MCF 10A (cell line): ENCODE measurements at regions of chr4 and their contacts with region 1.

Region 1: DNA sequence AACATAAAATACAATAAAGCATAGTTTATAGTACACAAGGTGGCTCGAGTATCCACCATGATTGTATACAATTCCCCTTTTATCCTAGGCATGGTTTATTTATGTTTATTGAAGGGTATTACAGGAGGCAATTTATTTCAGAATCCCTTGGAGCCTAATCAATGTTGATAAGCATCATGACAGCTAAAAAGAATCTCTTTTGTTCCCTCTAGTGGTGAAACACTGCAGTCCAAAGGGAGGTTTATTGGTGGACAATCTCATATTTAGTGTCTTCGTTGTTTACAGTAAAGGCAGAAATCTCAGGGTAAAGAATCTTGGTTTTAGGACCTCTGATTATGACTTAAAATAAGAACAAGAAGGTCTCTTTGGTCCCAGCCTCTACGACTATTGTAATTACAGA is 1712.5 kb downstream of the C4orf33 start:
- DNase-seq: peak; percentile 50
- H3K4me3 Mint-ChIP-seq: no peak overlapping the region
- H3K27ac Mint-ChIP-seq: no peak overlapping the region
- H3K4me1 Mint-ChIP-seq: no peaks in the 10 kb centered on the region
- H3K27me3 Mint-ChIP-seq: no peaks in the 10 kb centered on the region
- CTCF ChIP-seq: peak; percentile 71

Region 2: DNA sequence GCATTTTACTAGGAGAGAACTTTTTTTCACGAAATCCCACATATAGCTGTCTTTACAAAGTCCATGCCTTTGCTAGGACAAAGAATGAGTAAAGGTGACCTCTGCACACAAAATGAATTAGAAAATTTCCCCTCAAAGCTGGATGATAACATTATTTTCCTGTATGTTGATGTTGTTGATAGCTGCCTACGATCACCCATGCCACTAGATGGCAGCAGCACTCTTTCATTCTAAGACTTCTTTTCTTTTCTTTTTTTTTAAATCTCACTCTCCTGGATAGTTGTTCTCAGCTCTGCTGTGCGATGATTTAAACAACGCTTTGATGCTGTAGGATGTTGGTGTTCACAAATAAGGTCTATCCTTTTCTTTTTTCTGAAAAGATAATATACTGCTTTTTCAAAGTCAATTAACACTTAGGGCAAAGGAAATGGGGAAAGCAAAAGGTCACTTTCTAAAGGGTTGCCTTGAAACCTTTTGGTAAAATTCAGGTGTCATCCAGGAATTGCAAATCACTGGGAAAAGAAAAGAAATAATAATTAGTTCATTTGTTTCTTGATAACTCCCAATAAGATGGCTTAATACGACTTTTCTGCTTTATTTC is 1445.7 kb before region 1 on chr4:
- CTCF ChIA-PET with region 1: no interaction called
- POLR2A ChIA-PET with region 1: no interaction called
- intact Hi-C with region 1: loop called (anchors 2 kb)
- DNase-seq: peak; percentile 87
- H3K4me3 Mint-ChIP-seq: no peak overlapping the region
- H3K27ac Mint-ChIP-seq: no peak overlapping the region
- H3K4me1 Mint-ChIP-seq: peaks cover 12% of the 10 kb centered on the region
- H3K27me3 Mint-ChIP-seq: no peaks in the 10 kb centered on the region
- CTCF ChIP-seq: peak; percentile 78

Region 3: DNA sequence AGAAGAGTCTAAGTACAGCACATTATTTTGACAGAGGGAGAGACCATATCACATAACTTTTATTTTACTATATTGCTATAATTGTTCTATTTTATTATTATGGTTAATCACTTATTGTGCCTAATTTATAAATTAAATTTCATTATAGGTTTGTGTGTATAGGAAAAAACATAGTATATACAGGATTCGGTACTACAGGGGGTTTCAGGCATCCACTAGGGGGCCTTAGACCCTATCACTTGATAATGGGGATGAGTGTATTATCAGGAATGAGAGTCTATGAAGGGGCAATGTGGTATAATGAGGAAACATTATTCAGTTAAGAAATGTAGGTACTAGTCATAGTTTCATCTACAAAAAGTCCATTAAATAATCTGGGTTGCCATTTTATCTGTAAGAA is 879.4 kb before region 1 on chr4:
- CTCF ChIA-PET with region 1: interaction called, 3 read pairs
- POLR2A ChIA-PET with region 1: no interaction called
- intact Hi-C with region 1: loop called (anchors 5 kb)
- DNase-seq: peak; percentile 18
- H3K4me3 Mint-ChIP-seq: no peak overlapping the region
- H3K27ac Mint-ChIP-seq: no peak overlapping the region
- H3K4me1 Mint-ChIP-seq: no peaks in the 10 kb centered on the region
- H3K27me3 Mint-ChIP-seq: no peaks in the 10 kb centered on the region
- CTCF ChIP-seq: no peak

Region 4: GRCh38 chr4:130359542-130359941 is 448.9 kb before region 1 on chr4:
- CTCF ChIA-PET with region 1: interaction called, 12 read pairs
- POLR2A ChIA-PET with region 1: no interaction called
- intact Hi-C with region 1: loop called (anchors 1 kb)
- DNase-seq: peak; percentile 39
- H3K4me3 Mint-ChIP-seq: no peak overlapping the region
- H3K27ac Mint-ChIP-seq: no peak overlapping the region
- H3K4me1 Mint-ChIP-seq: no peaks in the 10 kb centered on the region
- H3K27me3 Mint-ChIP-seq: no peaks in the 10 kb centered on the region
- CTCF ChIP-seq: peak; percentile 65

Region 5: DNA sequence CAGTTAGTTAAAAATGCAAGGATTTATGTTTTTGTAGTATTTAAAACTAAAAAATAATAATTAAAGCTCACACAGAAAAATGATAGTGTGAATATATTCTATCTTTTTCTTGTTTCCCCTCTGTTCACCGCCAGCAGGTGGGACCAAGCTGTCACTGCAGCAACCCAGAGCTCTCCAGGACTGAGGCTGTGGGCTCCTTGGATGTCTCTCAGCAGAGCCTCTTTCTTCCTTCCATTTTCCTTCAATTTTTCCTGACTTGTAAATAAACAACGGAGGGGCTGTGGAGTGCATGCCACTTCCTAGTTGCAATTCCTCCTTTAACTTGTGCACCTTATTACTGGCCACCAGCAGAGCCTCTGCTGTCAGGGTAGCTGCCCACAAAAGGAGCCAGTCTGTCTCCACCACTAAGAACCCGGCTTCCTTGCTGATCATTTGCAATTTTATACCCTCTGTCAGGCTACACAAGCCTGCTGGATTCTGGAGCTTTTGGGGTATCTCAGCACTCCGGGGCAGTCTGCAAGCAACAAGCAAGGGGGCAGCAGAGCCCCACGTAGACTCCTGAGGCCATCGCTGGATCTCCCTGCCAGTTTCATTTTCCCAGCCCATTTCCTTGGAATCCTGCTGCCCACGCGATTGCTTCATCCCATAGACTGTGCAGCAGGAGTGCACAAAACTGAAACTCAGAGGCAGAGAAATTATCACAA is 245.2 kb before region 1 on chr4:
- CTCF ChIA-PET with region 1: interaction called, 4 read pairs
- POLR2A ChIA-PET with region 1: no interaction called
- intact Hi-C with region 1: loop called (anchors 1 kb)
- DNase-seq: peak; percentile 91
- H3K4me3 Mint-ChIP-seq: peak overlapping the region; percentile 74
- H3K27ac Mint-ChIP-seq: peak overlapping the region; percentile 17
- H3K4me1 Mint-ChIP-seq: peaks cover 17% of the 10 kb centered on the region
- H3K27me3 Mint-ChIP-seq: no peaks in the 10 kb centered on the region
- CTCF ChIP-seq: peak; percentile 34

Region 6: DNA sequence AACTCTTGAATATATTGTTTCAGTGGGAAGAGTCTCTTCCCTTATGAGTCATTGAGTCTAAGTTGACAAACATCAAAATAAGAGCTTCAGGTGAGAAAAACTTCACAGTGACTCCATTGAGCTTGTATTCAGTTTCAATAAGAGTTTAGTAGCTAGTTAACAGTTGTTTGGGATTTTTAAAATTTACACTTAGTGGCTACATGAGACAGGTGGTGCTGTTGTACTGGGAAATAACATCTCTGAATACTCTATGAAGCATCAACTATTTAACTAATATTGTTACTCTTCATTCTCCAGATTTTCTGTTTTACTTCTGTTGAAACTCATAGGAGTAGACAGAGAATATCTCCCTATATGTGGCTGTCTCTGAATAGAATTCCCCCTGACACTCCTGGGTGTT is 103.5 kb before region 1 on chr4:
- CTCF ChIA-PET with region 1: interaction called, 12 read pairs
- POLR2A ChIA-PET with region 1: no interaction called
- intact Hi-C with region 1: loop called (anchors 2 kb)
- DNase-seq: peak; percentile 4
- H3K4me3 Mint-ChIP-seq: no peak overlapping the region
- H3K27ac Mint-ChIP-seq: no peak overlapping the region
- H3K4me1 Mint-ChIP-seq: peaks cover 9% of the 10 kb centered on the region
- H3K27me3 Mint-ChIP-seq: no peaks in the 10 kb centered on the region
- CTCF ChIP-seq: peak; percentile 31

Region 7: DNA sequence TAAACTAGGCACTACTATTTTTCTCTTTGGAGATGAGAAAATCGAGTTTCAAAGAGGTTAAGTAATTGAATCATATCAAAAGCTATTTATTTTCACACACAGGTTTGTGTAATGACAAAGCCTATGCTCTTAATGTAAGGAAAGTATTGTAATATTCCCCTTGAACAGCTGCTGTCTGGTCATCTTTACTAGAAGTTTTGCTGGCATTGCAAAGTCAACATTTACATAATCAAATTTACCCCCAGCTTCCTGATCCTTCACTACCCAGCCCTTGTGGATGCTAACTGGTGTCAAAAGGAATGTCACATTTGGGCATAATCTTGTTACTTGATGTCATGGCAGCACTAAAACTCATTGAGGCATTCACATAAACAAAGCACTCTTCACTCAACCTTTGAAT is 310.0 kb after region 1 on chr4:
- CTCF ChIA-PET with region 1: no interaction called
- POLR2A ChIA-PET with region 1: no interaction called
- intact Hi-C with region 1: no loop called
- DNase-seq: no peak
- H3K4me3 Mint-ChIP-seq: no peak overlapping the region
- H3K27ac Mint-ChIP-seq: no peak overlapping the region
- H3K4me1 Mint-ChIP-seq: no peaks in the 10 kb centered on the region
- H3K27me3 Mint-ChIP-seq: no peaks in the 10 kb centered on the region
- CTCF ChIP-seq: no peak